ENCODE measurements at regions of chr5 and their contacts with region 1.

Region 1: DNA sequence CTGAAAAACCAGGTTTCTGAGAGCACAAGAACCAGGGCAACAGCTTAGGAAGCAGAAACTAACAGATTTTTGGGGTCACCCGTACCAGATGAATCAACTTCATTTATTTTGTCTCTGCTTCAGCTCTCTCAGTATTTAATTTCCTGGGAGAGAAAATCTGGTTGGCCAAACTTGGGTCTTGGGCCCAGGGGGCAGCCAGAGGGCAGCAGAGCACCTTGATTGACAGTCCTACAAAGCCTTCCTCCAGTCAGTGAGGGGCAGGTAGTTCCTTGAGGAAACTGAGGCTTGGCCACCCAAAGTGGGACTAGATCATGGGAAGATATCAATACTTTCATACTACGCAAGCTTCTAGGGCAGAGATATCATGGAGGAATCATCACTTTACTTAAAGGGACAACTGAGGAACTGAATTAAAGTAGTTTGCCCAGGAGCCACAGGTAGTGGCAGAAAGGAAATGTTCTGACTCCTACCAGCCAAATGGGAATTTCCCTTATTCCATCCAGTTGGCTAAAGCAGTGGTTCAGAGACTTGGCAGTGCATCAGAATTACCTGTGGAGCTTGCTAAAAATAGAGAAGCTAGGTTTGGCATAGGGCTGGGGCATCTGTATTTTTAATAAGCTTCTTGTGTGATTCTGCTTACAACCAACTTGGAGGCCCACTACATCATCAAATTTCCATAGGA is 21.5 kb upstream of the ARHGAP26 start:
- DNase-seq: peak; percentile 60 to 73
- H3K4me3 ChIP-seq: no peak overlapping the region
- H3K4me3 Mint-ChIP-seq: no peak overlapping the region
- H3K27ac Mint-ChIP-seq: no peak overlapping the region
- H3K4me1 ChIP-seq: no peaks in the 10 kb centered on the region
- H3K4me1 Mint-ChIP-seq: peaks cover 11% of the 10 kb centered on the region
- H3K27me3 ChIP-seq: no peaks in the 10 kb centered on the region
- H3K27me3 Mint-ChIP-seq: no peaks in the 10 kb centered on the region
- CTCF ChIP-seq: peak; percentile 80 to 94

Region 2: GRCh38 chr5:142720641-142721271 is 28.0 kb before region 1 on chr5:
- CTCF ChIA-PET with region 1: interaction called, 17 read pairs
- POLR2A ChIA-PET with region 1: interaction called, 5 read pairs
- intact Hi-C with region 1: loop called (anchors 1 kb)
- DNase-seq: peak; percentile 70 to 71
- H3K4me3 ChIP-seq: no peak overlapping the region
- H3K4me3 Mint-ChIP-seq: peak overlapping the region; percentile 55
- H3K27ac Mint-ChIP-seq: peak overlapping the region; percentile 87
- H3K4me1 ChIP-seq: peaks cover 23% of the 10 kb centered on the region
- H3K4me1 Mint-ChIP-seq: peaks cover 27% of the 10 kb centered on the region
- H3K27me3 ChIP-seq: no peaks in the 10 kb centered on the region
- H3K27me3 Mint-ChIP-seq: no peaks in the 10 kb centered on the region
- CTCF ChIP-seq: no peak

Region 3: GRCh38 chr5:142881076-142881783 is 132.5 kb after region 1 on chr5:
- CTCF ChIA-PET with region 1: interaction called, 12 read pairs
- POLR2A ChIA-PET with region 1: no interaction called
- intact Hi-C with region 1: loop called (anchors 1 kb)
- DNase-seq: no peak
- H3K4me3 ChIP-seq: no peak overlapping the region
- H3K4me3 Mint-ChIP-seq: no peak overlapping the region
- H3K27ac Mint-ChIP-seq: no peak overlapping the region
- H3K4me1 ChIP-seq: peaks cover 17% of the 10 kb centered on the region
- H3K4me1 Mint-ChIP-seq: peaks cover 15% of the 10 kb centered on the region
- H3K27me3 ChIP-seq: no peaks in the 10 kb centered on the region
- H3K27me3 Mint-ChIP-seq: no peaks in the 10 kb centered on the region
- CTCF ChIP-seq: no peak

Region 4: GRCh38 chr5:142888469-142889085 is 139.9 kb after region 1 on chr5:
- CTCF ChIA-PET with region 1: interaction called, 25 read pairs
- POLR2A ChIA-PET with region 1: no interaction called
- intact Hi-C with region 1: loop called (anchors 1 kb)
- DNase-seq: peak; percentile 54 to 59
- H3K4me3 ChIP-seq: no peak overlapping the region
- H3K4me3 Mint-ChIP-seq: no peak overlapping the region
- H3K27ac Mint-ChIP-seq: no peak overlapping the region
- H3K4me1 ChIP-seq: peaks cover 17% of the 10 kb centered on the region
- H3K4me1 Mint-ChIP-seq: peaks cover 7% of the 10 kb centered on the region
- H3K27me3 ChIP-seq: no peaks in the 10 kb centered on the region
- H3K27me3 Mint-ChIP-seq: no peaks in the 10 kb centered on the region
- CTCF ChIP-seq: peak; percentile 68 to 69

Region 5: GRCh38 chr5:142915813-142916424 is 167.2 kb after region 1 on chr5:
- CTCF ChIA-PET with region 1: no interaction called
- POLR2A ChIA-PET with region 1: no interaction called
- intact Hi-C with region 1: loop called (anchors 1 kb)
- DNase-seq: peak; percentile 58 to 67
- H3K4me3 ChIP-seq: no peak overlapping the region
- H3K4me3 Mint-ChIP-seq: no peak overlapping the region
- H3K27ac Mint-ChIP-seq: no peak overlapping the region
- H3K4me1 ChIP-seq: peaks cover 9% of the 10 kb centered on the region; the same call in 1 of the 2 replicates
- H3K4me1 Mint-ChIP-seq: peaks cover 22% of the 10 kb centered on the region
- H3K27me3 ChIP-seq: no peaks in the 10 kb centered on the region
- H3K27me3 Mint-ChIP-seq: no peaks in the 10 kb centered on the region
- CTCF ChIP-seq: peak; percentile 76 to 91

Measured in Caco-2 (cell line).